ENCODE measurements at regions of chr1 and their contacts with region 1.

Region 1: GRCh38 chr1:63691701-63692425 is 82.0 kb upstream of the ROR1 start:
- DNase-seq: peak; percentile 78
- ATAC-seq: peak; percentile 95
- H3K4me3 ChIP-seq: no peak overlapping the region
- H3K27ac ChIP-seq: no peak overlapping the region
- H3K4me1 ChIP-seq: peaks cover 0 to 6% of the 10 kb centered on the region in 2 experiments; a peak in 1 of 4 replicates
- H3K27me3 ChIP-seq: no peaks in the 10 kb centered on the region
- CTCF ChIP-seq: peak; percentile 80 to 84 (median 82)
- POLR2A ChIP-seq: no peak
- RAD21 ChIP-seq: peak; percentile 92

Region 2: DNA sequence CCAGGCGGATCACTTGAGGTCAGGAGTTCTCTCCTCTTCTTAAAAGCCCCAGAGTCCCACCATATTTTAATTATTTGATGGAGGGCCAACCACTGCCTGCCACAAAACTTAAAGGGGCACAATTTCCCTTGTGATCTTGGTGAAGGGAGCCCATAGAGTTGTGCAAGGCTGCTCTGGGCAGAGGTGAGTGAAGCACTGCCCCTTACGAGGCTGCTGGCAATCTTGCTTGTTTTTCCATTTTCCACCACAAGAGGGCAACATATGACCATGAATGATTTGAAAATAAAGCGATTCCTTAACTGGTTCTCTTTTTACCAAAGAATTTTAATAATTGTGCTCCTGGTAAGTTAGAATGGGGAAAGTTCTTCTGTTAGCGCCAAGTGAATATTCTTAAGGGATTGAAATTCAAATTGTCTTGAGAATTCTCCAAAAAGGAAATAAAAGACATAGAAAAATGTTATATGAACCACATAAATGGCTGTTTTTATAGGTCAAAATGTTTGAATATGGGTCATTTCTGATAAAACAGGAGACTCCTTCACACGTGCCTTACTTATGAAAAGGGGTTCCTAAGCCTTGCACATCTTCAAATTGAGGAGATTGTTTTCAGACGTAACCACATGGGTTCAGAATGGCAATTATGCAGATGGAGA is 76.0 kb before region 1 on chr1:
- CTCF ChIA-PET with region 1: interaction called, 14 read pairs
- POLR2A ChIA-PET with region 1: no interaction called
- RAD21 ChIA-PET with region 1: interaction called in 1 of 2 experiments, 7 read pairs
- intact Hi-C with region 1: no loop called
- DNase-seq: peak; percentile 58
- ATAC-seq: peak; percentile 89
- H3K4me3 ChIP-seq: no peak overlapping the region
- H3K27ac ChIP-seq: no peak overlapping the region
- H3K4me1 ChIP-seq: peaks cover 0 to 4% of the 10 kb centered on the region in 2 experiments; a peak in 1 of 4 replicates
- H3K27me3 ChIP-seq: no peaks in the 10 kb centered on the region
- CTCF ChIP-seq: peak; percentile 58 to 83 (median 73); a peak in 5 of 6 replicates
- POLR2A ChIP-seq: no peak
- RAD21 ChIP-seq: peak; percentile 87

Region 3: GRCh38 chr1:63674238-63674864 is 17.5 kb before region 1 on chr1:
- CTCF ChIA-PET with region 1: interaction called, 31 read pairs
- POLR2A ChIA-PET with region 1: interaction called, 7 read pairs
- RAD21 ChIA-PET with region 1: interaction called, 4 to 7 read pairs
- intact Hi-C with region 1: no loop called
- DNase-seq: peak; percentile 67
- ATAC-seq: peak; percentile 96
- H3K4me3 ChIP-seq: no peak overlapping the region
- H3K27ac ChIP-seq: no peak overlapping the region
- H3K4me1 ChIP-seq: peaks cover 7 to 28% of the 10 kb centered on the region in 2 experiments; a peak in 3 of 4 replicates
- H3K27me3 ChIP-seq: no peaks in the 10 kb centered on the region
- CTCF ChIP-seq: peak; percentile 61 to 79 (median 77); a peak in 5 of 6 replicates
- POLR2A ChIP-seq: no peak
- RAD21 ChIP-seq: peak; percentile 88

Region 4: GRCh38 chr1:63773815-63774616 is 82.2 kb after region 1 on chr1 and contains the start of gene ROR1:
- CTCF ChIA-PET with region 1: interaction called, 12 read pairs
- POLR2A ChIA-PET with region 1: no interaction called
- RAD21 ChIA-PET with region 1: interaction called in 1 of 2 experiments, 4 read pairs
- intact Hi-C with region 1: no loop called
- DNase-seq: peak; percentile 72
- ATAC-seq: peak; percentile 95
- H3K4me3 ChIP-seq: peak within 1 kb of the TSS; percentile 58 to 70
- H3K27ac ChIP-seq: no peak within 1 kb of the TSS; the same call in 1 of the 2 replicates
- H3K4me1 ChIP-seq: peaks cover 11 to 24% of the 10 kb centered on the region in 2 experiments; a peak in 3 of 4 replicates
- H3K27me3 ChIP-seq: no peaks in the 10 kb centered on the region
- CTCF ChIP-seq: peak; percentile 52 to 67 (median 67)
- POLR2A ChIP-seq: no peak
- RAD21 ChIP-seq: peak; percentile 76
- total RNA-seq, gene ROR1: 2.7 TPM

Region 5: GRCh38 chr1:64136752-64137411 is 445.0 kb after region 1 on chr1:
- CTCF ChIA-PET with region 1: interaction called, 55 read pairs
- POLR2A ChIA-PET with region 1: interaction called, 3 read pairs
- RAD21 ChIA-PET with region 1: interaction called, 3 to 14 read pairs
- intact Hi-C with region 1: loop called (anchors 1 kb)
- DNase-seq: peak; percentile 46
- ATAC-seq: peak; percentile 94
- H3K4me3 ChIP-seq: no peak overlapping the region
- H3K27ac ChIP-seq: no peak overlapping the region
- H3K4me1 ChIP-seq: peaks cover 0 to 12% of the 10 kb centered on the region in 2 experiments; a peak in 2 of 4 replicates
- H3K27me3 ChIP-seq: no peaks in the 10 kb centered on the region
- CTCF ChIP-seq: peak; percentile 84 to 96 (median 93)
- POLR2A ChIP-seq: no peak
- RAD21 ChIP-seq: peak; percentile 88